Activated T-helper 2 cell treated with anti-CD3 and anti-CD28 coated beads, Interferon-gamma antibody, Interleukin-2, Interleukin-4, amounts not matched to agents 10 μg/mL and 5 μg/mL and 100 μg/mL, durations not matched to agents 14 hours and 24 hours and 36 hours (primary cell): ENCODE measurements at regions of chr9 and their contacts with region 1.

Region 1: GRCh38 chr9:97921959-97922724 is at the start of gene TRMO:
- DNase-seq: peak; percentile 96
- H3K4me3 Mint-ChIP-seq: peak within 1 kb of the TSS; percentile 97
- H3K27ac Mint-ChIP-seq: peak within 1 kb of the TSS; percentile 100
- H3K4me1 Mint-ChIP-seq: peaks cover 42% of the 10 kb centered on the region
- H3K27me3 Mint-ChIP-seq: peaks cover 2% of the 10 kb centered on the region
- total RNA-seq, gene TRMO: 13.4 and 15.3 TPM in 2 replicates

Region 2: DNA sequence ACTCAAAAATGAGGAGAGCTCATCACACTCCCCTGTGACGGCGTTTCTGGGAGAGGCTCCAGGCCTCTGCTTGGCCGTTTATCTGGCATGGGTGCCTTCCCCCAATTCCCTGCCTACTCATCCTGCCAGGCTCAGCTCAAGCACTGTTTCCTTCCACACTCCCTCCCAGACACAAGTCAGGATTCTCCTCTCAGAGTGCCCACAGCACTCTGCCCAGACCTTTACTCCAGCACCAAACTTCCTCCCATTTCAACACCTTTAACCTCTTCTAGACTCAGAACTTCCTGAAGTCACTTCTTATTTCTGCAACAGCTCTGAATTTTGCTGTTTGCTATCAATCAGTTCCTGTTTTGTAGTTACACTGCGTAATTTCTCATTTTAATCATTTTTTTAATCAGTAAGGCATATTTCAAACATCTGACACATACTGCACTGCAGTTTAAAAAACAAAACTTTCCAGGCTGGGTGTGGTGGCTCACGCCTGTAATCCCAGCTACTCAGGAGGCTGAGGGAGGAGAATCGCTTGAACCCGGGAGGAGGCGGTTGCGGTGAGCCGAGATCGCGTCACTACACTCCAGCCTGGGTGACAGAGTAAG is 15.8 kb before region 1 on chr9:
- intact Hi-C with region 1: loop called (anchors 1 kb)
- DNase-seq: no peak
- H3K4me3 Mint-ChIP-seq: peak overlapping the region; percentile 69
- H3K27ac Mint-ChIP-seq: peak overlapping the region; percentile 96
- H3K4me1 Mint-ChIP-seq: peaks cover 56% of the 10 kb centered on the region
- H3K27me3 Mint-ChIP-seq: no peaks in the 10 kb centered on the region

Region 3: GRCh38 chr9:97982683-97983588 is 60.8 kb after region 1 on chr9 and contains the start of gene ANP32B:
- intact Hi-C with region 1: loop called (anchors 1 kb)
- DNase-seq: peak; percentile 93
- H3K4me3 Mint-ChIP-seq: peak within 1 kb of the TSS; percentile 84
- H3K27ac Mint-ChIP-seq: peak within 1 kb of the TSS; percentile 80
- H3K4me1 Mint-ChIP-seq: peaks cover 27% of the 10 kb centered on the region
- H3K27me3 Mint-ChIP-seq: no peaks in the 10 kb centered on the region
- total RNA-seq, gene ANP32B: 307 and 323 TPM in 2 replicates

Region 4: DNA sequence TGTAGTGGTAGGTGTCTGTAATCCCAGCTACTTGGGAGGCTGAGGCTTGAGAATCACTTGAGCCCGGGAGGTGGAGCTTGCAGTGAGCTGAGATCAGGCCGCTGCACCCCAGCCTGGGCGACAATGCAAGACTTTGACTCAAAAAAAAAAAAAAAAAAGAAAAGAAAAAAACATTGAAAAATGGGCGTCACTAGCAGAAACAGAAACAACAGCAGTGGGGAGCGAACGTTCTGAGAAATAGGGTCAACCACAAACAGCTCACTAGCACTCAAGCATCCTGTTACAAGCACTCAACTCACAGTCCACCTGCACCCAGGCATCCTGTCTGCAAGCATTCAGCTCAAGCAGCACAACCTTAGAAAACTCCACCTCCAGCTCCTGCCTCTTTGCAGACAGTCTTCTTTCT is 179.7 kb after region 1 on chr9:
- intact Hi-C with region 1: loop called (anchors 10 kb)
- DNase-seq: peak; percentile 84
- H3K4me3 Mint-ChIP-seq: peak overlapping the region; percentile 74
- H3K27ac Mint-ChIP-seq: peak overlapping the region; percentile 97
- H3K4me1 Mint-ChIP-seq: peaks cover 67% of the 10 kb centered on the region
- H3K27me3 Mint-ChIP-seq: no peaks in the 10 kb centered on the region

Region 5: DNA sequence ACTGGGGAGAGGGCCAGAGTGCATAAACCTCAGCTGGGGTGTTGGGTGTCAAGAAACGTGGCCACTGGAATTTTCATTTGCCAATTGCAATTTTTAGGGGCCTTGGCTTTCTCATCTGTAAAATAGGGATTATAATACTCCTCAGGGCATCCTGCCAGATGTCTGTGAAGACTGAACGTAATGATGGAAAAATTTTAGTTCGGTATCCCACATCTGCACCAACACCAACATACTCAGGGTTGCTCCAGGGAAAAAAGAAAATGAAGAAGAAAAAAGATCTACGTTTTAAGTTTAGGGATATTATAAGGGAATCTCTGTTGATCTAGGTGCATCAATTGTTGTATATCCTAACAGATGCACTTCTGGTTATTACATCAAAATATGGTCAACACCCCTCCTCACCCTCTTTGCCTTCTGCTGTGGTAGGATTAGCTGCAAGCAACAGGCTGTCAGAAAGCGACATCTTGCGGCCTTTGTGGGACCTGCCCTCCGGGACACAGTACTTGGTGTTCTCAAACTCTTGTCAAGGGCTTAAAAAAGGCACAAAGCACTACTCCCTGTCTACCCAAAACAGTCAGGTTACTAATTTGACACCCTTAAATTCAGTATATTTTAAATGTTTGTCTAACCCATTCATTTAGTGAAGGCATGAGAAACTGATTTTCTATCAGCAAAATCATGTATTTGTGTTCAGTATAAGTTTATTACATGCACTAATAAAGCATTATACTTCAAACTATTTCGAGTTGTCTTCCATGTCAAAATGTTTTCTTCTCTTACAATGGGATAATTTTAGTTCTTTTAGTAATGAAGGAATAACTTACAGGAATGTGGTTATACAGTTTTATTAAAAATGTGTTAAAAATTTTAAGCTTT is 341.6 kb after region 1 on chr9:
- intact Hi-C with region 1: loop called (anchors 1 kb)
- DNase-seq: peak; percentile 71
- H3K4me3 Mint-ChIP-seq: no peak overlapping the region
- H3K27ac Mint-ChIP-seq: no peak overlapping the region
- H3K4me1 Mint-ChIP-seq: no peaks in the 10 kb centered on the region
- H3K27me3 Mint-ChIP-seq: peaks cover 20% of the 10 kb centered on the region